H1 (cell line): ENCODE measurements at regions of chr6 and their contacts with region 1.

Region 1: GRCh38 chr6:10722820-10723566 is at the start of gene TMEM14C:
- DNase-seq: peak; percentile 95 to 98
- H3K4me3 ChIP-seq: peak within 1 kb of the TSS; percentile 80 to 91 (median 88)
- H3K27ac ChIP-seq: peak within 1 kb of the TSS; percentile 65
- H3K4me1 ChIP-seq: peaks cover 0 to 12% (median 4%) of the 10 kb centered on the region in 4 experiments; a peak in 3 of 7 replicates
- H3K27me3 ChIP-seq: no peaks in the 10 kb centered on the region
- CTCF ChIP-seq: no peak
- EP300 ChIP-seq: 0 out of 3 replicates have a peak, but pooled peaks of 1 of the 2 experiments have one; percentile 36
- POLR2A ChIP-seq: peak in 1 of 2 experiments; percentile 83; a peak in 2 of 3 replicates
- RAD21 ChIP-seq: peak in 1 of 2 experiments; percentile 6; a peak in 3 of 4 replicates
- total RNA-seq, gene TMEM14C: 111 and 116 TPM in 2 replicates

Region 2: DNA sequence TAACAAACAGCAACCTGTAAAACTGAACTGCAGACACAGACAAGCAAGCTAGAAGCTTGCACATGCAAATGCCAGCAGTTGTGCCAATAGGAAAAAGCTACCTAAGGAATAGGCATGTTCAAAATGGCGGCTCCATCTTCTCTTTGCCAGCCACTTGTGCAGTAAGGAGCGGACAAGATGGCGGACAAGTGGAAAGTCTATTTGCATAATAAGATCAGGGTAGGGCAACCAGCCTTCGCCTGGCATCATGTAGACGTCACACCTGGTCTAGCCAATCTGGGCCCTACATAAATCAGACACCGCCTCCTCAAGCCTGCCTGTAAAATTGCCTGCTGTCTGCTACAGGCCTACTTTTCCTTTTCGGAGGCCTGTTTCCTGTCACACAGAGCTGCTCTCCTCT is 46.6 kb before region 1 on chr6:
- CTCF ChIA-PET with region 1: no interaction called
- POLR2A ChIA-PET with region 1: no interaction called
- DNase-seq: no peak
- H3K4me3 ChIP-seq: no peak overlapping the region
- H3K27ac ChIP-seq: no peak overlapping the region
- H3K4me1 ChIP-seq: no peaks in the 10 kb centered on the region
- H3K27me3 ChIP-seq: no peaks in the 10 kb centered on the region
- CTCF ChIP-seq: no peak
- EP300 ChIP-seq: no peak
- POLR2A ChIP-seq: no peak
- RAD21 ChIP-seq: no peak

Region 3: DNA sequence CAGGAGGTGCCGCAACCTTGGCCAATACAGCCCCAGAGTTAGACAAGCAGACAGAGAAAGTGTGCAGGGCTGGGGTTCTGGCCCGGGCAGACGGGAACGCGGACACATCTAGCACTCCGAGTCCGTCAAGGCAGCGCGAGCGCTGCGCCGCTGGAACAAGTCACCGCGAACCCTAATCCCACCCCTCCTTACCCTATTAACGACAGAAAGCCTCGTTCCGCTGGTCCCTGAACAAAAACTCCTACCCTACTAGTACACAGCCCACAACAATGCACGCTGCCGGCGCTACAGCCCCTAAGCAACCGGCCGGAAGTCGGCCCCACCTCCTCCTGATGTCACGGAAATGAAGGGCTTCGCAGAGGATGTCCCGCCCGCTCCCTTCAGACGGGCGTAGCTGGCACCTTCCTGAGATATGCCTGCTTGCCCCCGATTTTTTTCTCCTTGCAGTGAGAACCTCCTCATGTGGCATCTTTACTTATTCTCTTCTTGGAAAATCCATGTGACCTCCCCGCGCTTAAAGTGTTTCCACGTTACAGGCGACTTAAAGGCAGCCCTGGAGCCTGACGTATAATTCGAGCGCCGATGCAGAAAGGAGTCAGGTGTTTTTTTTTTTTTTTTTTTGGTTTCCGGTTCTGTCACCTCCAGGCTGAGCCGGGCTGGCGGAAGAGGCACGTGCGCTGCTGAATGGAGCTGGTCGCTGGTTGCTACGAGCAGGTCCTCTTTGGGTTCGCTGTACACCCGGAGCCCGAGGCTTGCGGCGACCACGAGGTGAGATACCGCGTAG is 28.5 kb before region 1 on chr6 and contains the starts of genes C6orf52 and PAK1IP1:
- CTCF ChIA-PET with region 1: interaction called, 7 read pairs
- POLR2A ChIA-PET with region 1: interaction called, 10 read pairs
- DNase-seq: peak; percentile 73 to 90
- H3K4me3 ChIP-seq: peak within 1 kb of the TSS; percentile 78 to 97 (median 92)
- H3K27ac ChIP-seq: peak within 1 kb of the TSS; percentile 97
- H3K4me1 ChIP-seq: peaks cover 0 to 3% (median 0%) of the 10 kb centered on the region in 4 experiments; a peak in 2 of 7 replicates
- H3K27me3 ChIP-seq: no peaks in the 10 kb centered on the region
- CTCF ChIP-seq: no peak
- EP300 ChIP-seq: peak in 1 of 2 experiments; percentile 52; a peak in 1 of 3 replicates
- POLR2A ChIP-seq: peak; percentile 73 to 88; a peak in 2 of 3 replicates
- RAD21 ChIP-seq: peak in 1 of 2 experiments; percentile 7; a peak in 1 of 4 replicates
- total RNA-seq, gene C6orf52: 1.1 and 1.5 TPM in 2 replicates
- total RNA-seq, gene PAK1IP1: 43.6 and 46.4 TPM in 2 replicates

Region 4: DNA sequence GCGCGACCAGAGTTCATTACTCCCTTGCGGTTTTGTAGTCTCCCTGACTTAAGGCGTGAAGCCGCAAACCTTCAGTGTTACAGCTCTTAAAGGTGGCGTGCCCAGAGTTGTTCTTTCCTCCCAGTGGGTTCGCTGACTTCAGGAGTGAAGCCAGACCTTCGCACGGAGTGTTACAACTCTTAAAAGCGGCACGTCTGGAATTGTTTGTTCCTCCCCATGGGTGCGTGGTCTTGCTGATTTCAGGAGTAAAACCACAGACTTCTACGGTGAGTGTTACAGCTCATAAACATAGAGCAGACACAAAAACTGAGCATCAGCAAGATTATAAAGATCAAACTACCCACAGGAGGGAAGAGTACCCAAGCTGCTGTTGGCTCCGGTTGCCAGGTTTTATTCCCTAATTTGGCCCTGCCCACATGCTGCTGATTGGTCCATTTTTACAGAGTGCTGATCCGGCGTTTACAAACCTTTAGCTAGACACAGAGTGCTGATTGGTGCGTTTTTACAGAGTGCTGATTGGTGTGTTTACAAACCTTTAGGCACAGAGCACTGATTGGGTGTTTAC is 10.2 kb after region 1 on chr6:
- CTCF ChIA-PET with region 1: interaction called, 7 read pairs
- POLR2A ChIA-PET with region 1: interaction called, 10 read pairs
- DNase-seq: peak in 1 of 2 experiments; percentile 35
- H3K4me3 ChIP-seq: no peak overlapping the region
- H3K27ac ChIP-seq: no peak overlapping the region
- H3K4me1 ChIP-seq: no peaks in the 10 kb centered on the region
- H3K27me3 ChIP-seq: no peaks in the 10 kb centered on the region
- CTCF ChIP-seq: no peak
- EP300 ChIP-seq: no peak
- POLR2A ChIP-seq: no peak
- RAD21 ChIP-seq: no peak

Region 5: DNA sequence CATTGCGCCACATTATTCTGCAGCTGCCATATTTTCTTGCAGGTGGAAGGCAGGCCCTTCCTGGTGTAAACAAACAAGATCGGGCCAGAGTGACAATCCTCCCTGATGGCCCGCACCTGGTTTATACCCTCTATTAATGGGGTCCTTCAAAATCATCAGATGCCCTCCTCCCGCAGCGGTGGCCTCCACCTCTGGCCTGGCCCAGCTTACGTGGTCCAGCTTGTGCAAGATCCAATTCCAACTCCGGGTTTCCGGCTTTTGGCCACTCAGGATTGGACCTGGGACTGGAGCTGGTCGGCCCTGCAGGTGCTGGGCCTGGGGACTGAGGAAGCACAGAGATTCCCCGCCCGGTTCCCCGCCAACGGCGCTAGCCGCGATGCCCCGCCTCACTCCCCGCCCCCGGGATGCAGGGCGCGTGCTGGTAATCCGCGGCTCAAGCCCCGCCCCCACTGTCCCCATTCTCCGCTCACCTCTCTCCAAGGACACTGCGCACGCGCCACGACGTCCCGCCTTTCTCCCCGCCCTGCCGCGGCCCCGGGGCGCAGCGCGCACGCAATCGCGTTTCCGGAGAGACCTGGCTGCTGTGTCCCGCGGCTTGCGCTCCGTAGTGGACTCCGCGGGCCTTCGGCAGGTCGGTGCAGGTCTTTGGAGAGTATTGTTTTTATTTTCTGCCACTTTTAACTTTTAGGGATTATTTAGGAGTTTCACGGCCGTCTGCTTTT is 24.4 kb after region 1 on chr6 and contains the start of gene TMEM14B:
- CTCF ChIA-PET with region 1: interaction called, 9 read pairs
- POLR2A ChIA-PET with region 1: interaction called, 39 read pairs
- DNase-seq: peak; percentile 95 to 100
- H3K4me3 ChIP-seq: peak within 1 kb of the TSS; percentile 54 to 91 (median 84)
- H3K27ac ChIP-seq: peak within 1 kb of the TSS; percentile 21; the same call in 1 of the 2 replicates
- H3K4me1 ChIP-seq: peaks cover 0 to 8% (median 1%) of the 10 kb centered on the region in 4 experiments; a peak in 2 of 7 replicates
- H3K27me3 ChIP-seq: no peaks in the 10 kb centered on the region; a peak in 1 of 7 replicates
- CTCF ChIP-seq: no peak
- EP300 ChIP-seq: no peak
- POLR2A ChIP-seq: peak; percentile 67 to 87
- RAD21 ChIP-seq: no peak; a peak in 1 of 4 replicates
- total RNA-seq, gene TMEM14B: 83.8 and 84.6 TPM in 2 replicates

Region 6: GRCh38 chr6:10809098-10809497 is 86.1 kb after region 1 on chr6:
- CTCF ChIA-PET with region 1: no interaction called
- POLR2A ChIA-PET with region 1: no interaction called
- DNase-seq: no peak
- H3K4me3 ChIP-seq: no peak overlapping the region
- H3K27ac ChIP-seq: no peak overlapping the region
- H3K4me1 ChIP-seq: no peaks in the 10 kb centered on the region
- H3K27me3 ChIP-seq: no peaks in the 10 kb centered on the region
- CTCF ChIP-seq: no peak
- EP300 ChIP-seq: no peak
- POLR2A ChIP-seq: no peak
- RAD21 ChIP-seq: no peak